Dorsolateral prefrontal cortex (tissue), 120 donors: ENCODE measurements at regions of chr2 and their contacts with region 1.

Region 1: DNA sequence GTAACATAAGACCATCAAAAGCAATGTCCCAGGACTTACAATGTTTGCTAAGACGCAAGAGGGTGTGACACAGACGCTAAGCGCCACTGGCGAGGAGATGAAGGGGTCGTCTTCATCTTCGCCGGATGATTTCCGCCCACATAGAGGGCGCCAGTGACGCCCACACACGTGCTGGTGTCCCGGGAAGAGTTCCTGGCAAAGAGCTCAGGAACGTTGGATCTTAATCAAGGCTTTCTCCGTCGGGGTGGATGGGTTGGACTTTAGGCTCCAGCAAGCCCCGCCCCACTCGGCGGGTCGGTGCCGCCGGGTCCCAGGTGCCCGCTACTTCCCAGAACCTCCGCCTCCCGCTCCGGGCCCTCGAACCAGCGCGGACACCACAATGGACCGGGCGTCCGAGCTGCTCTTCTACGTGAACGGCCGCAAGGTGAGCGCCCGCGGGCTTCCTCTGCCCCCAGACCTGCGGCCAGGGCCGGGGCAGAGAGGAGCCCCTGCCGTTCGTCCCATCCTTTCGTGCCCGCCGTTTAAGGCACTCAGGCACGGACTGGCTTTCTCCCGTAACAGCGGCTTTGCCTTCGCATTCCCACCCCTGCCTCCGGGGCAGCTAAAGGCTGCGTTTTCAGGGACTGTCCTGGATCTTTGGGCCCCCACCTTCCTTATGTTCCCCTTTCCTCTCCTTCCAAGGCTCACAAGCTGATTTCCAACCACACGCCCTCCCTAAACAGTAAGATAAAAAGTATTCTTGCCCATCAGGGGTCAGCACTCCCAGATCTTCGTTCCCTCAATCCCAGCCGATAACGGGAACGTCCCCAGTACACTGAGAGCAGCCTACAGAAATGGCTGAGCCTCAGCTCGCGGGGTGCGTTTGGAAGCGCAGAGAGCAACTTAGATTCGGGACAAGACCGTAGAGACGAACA is at the start of gene AOX1:
- DNase-seq: peak in 7 of 10 donors; percentile 15 to 50 (median 25)
- H3K4me3 ChIP-seq: peak within 1 kb of the TSS; percentile 30 to 84 (median 66)
- H3K27ac ChIP-seq: peak within 1 kb of the TSS in 12 of 59 donors; percentile 12 to 68 (median 58)
- H3K27me3 ChIP-seq: peaks cover 0 to 7% (median 0%) of the 10 kb centered on the region in 45 donors
- CTCF ChIP-seq: peak in 19 of 56 donors; percentile 7 to 44 (median 22)
- total RNA-seq, gene AOX1: 0.39 to 8.4 (median 1.9) TPM

Region 2: GRCh38 chr2:199488772-199489400 is 1097.1 kb before region 1 on chr2:
- intact Hi-C with region 1: no loop called
- DNase-seq: peak in 6 of 10 donors; percentile 19 to 64 (median 52)
- H3K4me3 ChIP-seq: no peak overlapping the region
- H3K27ac ChIP-seq: no peak overlapping the region
- H3K27me3 ChIP-seq: peaks cover 0 to 3% (median 0%) of the 10 kb centered on the region in 45 donors
- CTCF ChIP-seq: peak; percentile 46 to 83 (median 70)

Region 3: GRCh38 chr2:200509612-200510433 is 76.2 kb before region 1 on chr2 and contains the start of gene KCTD18:
- intact Hi-C with region 1: loop called in 1 of 2 experiments (anchors 5 kb)
- DNase-seq: peak; percentile 81 to 96 (median 91)
- H3K4me3 ChIP-seq: peak within 1 kb of the TSS; percentile 59 to 94 (median 82)
- H3K27ac ChIP-seq: peak within 1 kb of the TSS in 58 of 59 donors; percentile 35 to 93 (median 83)
- H3K27me3 ChIP-seq: no peaks in the 10 kb centered on the region
- CTCF ChIP-seq: peak; percentile 40 to 96 (median 80)
- total RNA-seq, gene KCTD18: 8.4 to 19.0 (median 12.2) TPM

Region 4: DNA sequence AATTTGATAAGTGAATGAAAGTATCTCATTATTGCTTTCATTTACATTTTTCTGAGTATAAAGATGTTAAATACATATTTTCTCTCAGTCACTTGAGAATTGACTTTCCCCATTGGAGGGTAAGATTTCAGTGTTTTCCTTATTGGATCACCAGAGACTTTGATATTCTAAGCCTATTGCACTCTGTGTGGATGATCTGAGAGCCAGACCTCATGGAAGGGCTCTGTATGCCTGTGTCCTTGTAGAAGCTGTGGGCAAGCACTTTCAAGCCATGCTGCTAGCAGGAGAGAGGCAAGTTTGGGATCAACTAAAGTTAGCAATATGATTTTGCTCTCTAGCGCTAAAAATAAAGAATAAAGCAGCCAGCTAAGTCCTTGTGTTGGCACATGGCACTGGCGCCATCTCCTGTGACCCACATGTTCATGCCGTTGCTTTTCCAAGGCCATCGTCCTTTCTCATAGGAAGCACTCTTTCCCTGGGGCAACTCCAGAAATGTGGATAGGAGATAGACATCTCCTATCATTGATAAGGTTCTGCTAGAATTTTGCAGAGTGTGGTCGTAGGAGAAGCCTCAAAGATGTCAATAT is 72.4 kb after region 1 on chr2:
- intact Hi-C with region 1: no loop called
- DNase-seq: no peak
- H3K4me3 ChIP-seq: no peak overlapping the region
- H3K27ac ChIP-seq: no peak overlapping the region
- H3K27me3 ChIP-seq: peaks cover 0 to 13% (median 0%) of the 10 kb centered on the region in 45 donors
- CTCF ChIP-seq: no peak

Region 5: GRCh38 chr2:202172439-202173211 is 1586.6 kb after region 1 on chr2:
- intact Hi-C with region 1: no loop called
- DNase-seq: no peak
- H3K4me3 ChIP-seq: no peak overlapping the region
- H3K27ac ChIP-seq: no peak overlapping the region
- H3K27me3 ChIP-seq: peaks cover 0 to 10% (median 0%) of the 10 kb centered on the region in 45 donors
- CTCF ChIP-seq: no peak